ENCODE measurements at regions of chr3 and their contacts with region 1.

Region 1: DNA sequence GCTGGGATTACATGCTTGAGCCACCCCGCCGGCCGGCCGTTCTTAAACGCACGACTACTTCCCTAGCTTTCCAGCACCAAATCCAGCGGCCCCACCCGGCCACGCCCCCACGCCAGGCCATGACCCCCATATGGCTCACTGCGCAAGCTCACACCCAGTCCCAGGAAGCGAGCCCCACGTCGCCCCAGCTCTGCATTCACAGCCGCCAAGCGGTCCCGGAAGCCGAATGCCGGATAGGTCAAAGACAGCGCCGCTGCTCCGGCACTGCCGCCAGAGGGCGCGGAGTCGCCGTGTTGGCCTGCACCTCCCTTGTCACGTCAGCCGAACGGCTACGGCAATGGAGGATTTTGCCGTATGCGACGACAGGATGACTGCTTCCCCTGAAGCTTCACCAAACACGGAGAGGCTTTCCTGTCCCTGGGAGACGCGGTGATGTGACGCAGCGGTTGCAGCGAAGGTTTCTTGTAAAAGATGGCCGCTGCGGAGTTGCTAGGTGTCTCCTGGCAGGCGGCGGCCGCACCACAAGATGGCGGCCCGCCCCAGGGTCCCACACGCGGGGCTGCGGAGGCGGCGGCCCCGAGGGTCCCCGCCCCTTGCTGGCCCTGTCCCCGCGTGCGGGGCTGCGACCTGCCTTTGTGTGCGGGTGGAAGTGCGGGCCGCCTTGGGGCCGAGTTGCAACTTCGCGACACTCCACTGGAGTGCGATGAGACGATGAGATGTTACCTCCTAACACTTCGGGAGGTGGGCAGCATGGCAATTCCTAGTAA is 30.2 kb upstream of the RPN1 start:
- DNase-seq: peak; percentile 98
- ATAC-seq: peak; percentile 94
- H3K4me3 ChIP-seq: peak overlapping the region; percentile 67 to 89 (median 74)
- H3K4me3 Mint-ChIP-seq: peak overlapping the region; percentile 98
- H3K27ac ChIP-seq: peak overlapping the region; percentile 93 to 95
- H3K27ac Mint-ChIP-seq: peak overlapping the region; percentile 99
- H3K4me1 ChIP-seq: peaks cover 20 to 32% of the 10 kb centered on the region in 2 donors
- H3K4me1 Mint-ChIP-seq: peaks cover 21% of the 10 kb centered on the region
- H3K27me3 ChIP-seq: no peaks in the 10 kb centered on the region
- H3K27me3 Mint-ChIP-seq: no peaks in the 10 kb centered on the region
- CTCF ChIP-seq: peak; percentile 94

Region 2: GRCh38 chr3:128617557-128618397 is 63.0 kb before region 1 on chr3:
- CTCF ChIA-PET with region 1: interaction called, 13 read pairs
- POLR2A ChIA-PET with region 1: interaction called, 4 read pairs
- intact Hi-C with region 1: loop called (anchors 2 kb)
- DNase-seq: peak; percentile 99
- ATAC-seq: peak; percentile 95
- H3K4me3 ChIP-seq: peak overlapping the region; percentile 67 to 98 (median 78)
- H3K4me3 Mint-ChIP-seq: peak overlapping the region; percentile 96
- H3K27ac ChIP-seq: peak overlapping the region; percentile 71 to 90
- H3K27ac Mint-ChIP-seq: peak overlapping the region; percentile 91
- H3K4me1 ChIP-seq: peaks cover 11 to 23% of the 10 kb centered on the region in 2 donors
- H3K4me1 Mint-ChIP-seq: peaks cover 25% of the 10 kb centered on the region
- H3K27me3 ChIP-seq: no peaks in the 10 kb centered on the region
- H3K27me3 Mint-ChIP-seq: no peaks in the 10 kb centered on the region
- CTCF ChIP-seq: peak; percentile 99

Region 3: DNA sequence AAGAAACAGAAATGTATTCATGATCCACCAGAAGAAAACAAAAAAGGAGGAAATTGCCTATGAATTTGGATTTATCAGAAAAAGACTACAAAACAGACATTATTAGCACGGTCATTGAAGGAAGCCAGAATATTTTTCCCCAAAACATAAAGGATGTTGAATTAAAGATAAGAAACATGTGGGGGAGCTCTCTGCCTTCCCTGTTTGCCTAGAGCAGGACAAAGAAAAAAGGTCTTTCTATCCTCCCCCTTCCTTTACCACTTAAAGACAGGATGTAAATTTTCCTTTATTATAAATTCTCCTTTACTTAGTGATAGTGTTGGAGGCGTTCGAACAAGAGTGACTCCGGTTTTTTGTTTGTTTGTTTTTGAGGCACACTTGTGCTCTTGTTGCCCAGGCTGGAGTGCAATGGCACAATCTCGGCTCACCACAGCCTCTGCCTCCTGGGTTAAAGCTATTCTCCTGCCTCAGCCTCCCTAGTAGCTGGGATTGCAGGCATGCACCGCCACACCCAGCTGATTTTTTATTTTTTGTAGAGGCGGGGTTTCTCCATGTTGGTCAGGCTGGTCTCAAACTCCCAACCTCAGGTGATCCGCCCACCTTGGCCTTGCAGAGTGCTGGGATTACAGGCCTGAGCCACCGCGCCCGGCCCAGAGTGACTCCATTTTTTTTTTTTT is 15.3 kb before region 1 on chr3:
- CTCF ChIA-PET with region 1: interaction called, 5 read pairs
- POLR2A ChIA-PET with region 1: interaction called, 16 read pairs
- intact Hi-C with region 1: no loop called
- DNase-seq: no peak
- ATAC-seq: no peak
- H3K4me3 ChIP-seq: no peak overlapping the region
- H3K4me3 Mint-ChIP-seq: no peak overlapping the region
- H3K27ac ChIP-seq: no peak overlapping the region
- H3K27ac Mint-ChIP-seq: no peak overlapping the region
- H3K4me1 ChIP-seq: no peaks in the 10 kb centered on the region
- H3K4me1 Mint-ChIP-seq: peaks cover 2% of the 10 kb centered on the region
- H3K27me3 ChIP-seq: peaks cover 0 to 2% (median 0%) of the 10 kb centered on the region in 4 experiments
- H3K27me3 Mint-ChIP-seq: no peaks in the 10 kb centered on the region
- CTCF ChIP-seq: no peak

Region 4: GRCh38 chr3:128787256-128788240 is 106.8 kb after region 1 on chr3:
- CTCF ChIA-PET with region 1: interaction called, 85 read pairs
- POLR2A ChIA-PET with region 1: no interaction called
- intact Hi-C with region 1: no loop called
- DNase-seq: peak; percentile 68
- ATAC-seq: peak; percentile 80
- H3K4me3 ChIP-seq: no peak overlapping the region
- H3K4me3 Mint-ChIP-seq: peak overlapping the region; percentile 21
- H3K27ac ChIP-seq: peak overlapping the region; percentile 4 to 60
- H3K27ac Mint-ChIP-seq: peak overlapping the region; percentile 85
- H3K4me1 ChIP-seq: peaks cover 60% of the 10 kb centered on the region in 2 donors
- H3K4me1 Mint-ChIP-seq: peaks cover 88% of the 10 kb centered on the region
- H3K27me3 ChIP-seq: no peaks in the 10 kb centered on the region
- H3K27me3 Mint-ChIP-seq: no peaks in the 10 kb centered on the region
- CTCF ChIP-seq: peak; percentile 74

Region 5: GRCh38 chr3:128804017-128804810 is 123.4 kb after region 1 on chr3:
- CTCF ChIA-PET with region 1: interaction called, 9 read pairs
- POLR2A ChIA-PET with region 1: interaction called, 3 read pairs
- intact Hi-C with region 1: loop called (anchors 2 kb)
- DNase-seq: peak; percentile 84
- ATAC-seq: peak; percentile 95
- H3K4me3 ChIP-seq: peak overlapping the region; percentile 13 to 55 (median 28)
- H3K4me3 Mint-ChIP-seq: peak overlapping the region; percentile 69
- H3K27ac ChIP-seq: peak overlapping the region; percentile 58 to 89
- H3K27ac Mint-ChIP-seq: peak overlapping the region; percentile 84
- H3K4me1 ChIP-seq: peaks cover 19 to 21% of the 10 kb centered on the region in 2 donors
- H3K4me1 Mint-ChIP-seq: peaks cover 56% of the 10 kb centered on the region
- H3K27me3 ChIP-seq: no peaks in the 10 kb centered on the region
- H3K27me3 Mint-ChIP-seq: no peaks in the 10 kb centered on the region
- CTCF ChIP-seq: no peak

Region 6: GRCh38 chr3:128879125-128879969 is 198.6 kb after region 1 on chr3 and contains the start of gene ACAD9:
- CTCF ChIA-PET with region 1: interaction called, 24 read pairs
- POLR2A ChIA-PET with region 1: interaction called, 13 read pairs
- intact Hi-C with region 1: loop called (anchors 1 kb)
- DNase-seq: peak; percentile 97
- ATAC-seq: peak; percentile 96
- H3K4me3 ChIP-seq: peak within 1 kb of the TSS; percentile 86 to 97 (median 88)
- H3K4me3 Mint-ChIP-seq: peak within 1 kb of the TSS; percentile 95
- H3K27ac ChIP-seq: peak within 1 kb of the TSS; percentile 93 to 98
- H3K27ac Mint-ChIP-seq: peak within 1 kb of the TSS; percentile 95
- H3K4me1 ChIP-seq: peaks cover 24 to 31% of the 10 kb centered on the region in 2 donors
- H3K4me1 Mint-ChIP-seq: peaks cover 55% of the 10 kb centered on the region
- H3K27me3 ChIP-seq: no peaks in the 10 kb centered on the region
- H3K27me3 Mint-ChIP-seq: no peaks in the 10 kb centered on the region
- CTCF ChIP-seq: no peak
- total RNA-seq, gene ACAD9: 57.6 and 71.8 TPM in 2 replicates

Measured in B cell (primary cell).